ENCODE measurements at regions of chr10 and their contacts with region 1.

Region 1: GRCh38 chr10:103776878-103777591 is 78.3 kb downstream of the SH3PXD2A start:
- DNase-seq: peak; percentile 88 to 90
- ATAC-seq: peak; percentile 86
- H3K4me3 ChIP-seq: no peak overlapping the region
- H3K27ac ChIP-seq: no peak overlapping the region
- H3K4me1 ChIP-seq: no peaks in the 10 kb centered on the region
- H3K27me3 ChIP-seq: no peaks in the 10 kb centered on the region

Region 2: GRCh38 chr10:103840747-103841085 is 63.7 kb after region 1 on chr10:
- intact Hi-C with region 1: loop called in 1 of 2 experiments (anchors 1 kb)
- DNase-seq: no peak
- ATAC-seq: no peak
- H3K4me3 ChIP-seq: no peak overlapping the region
- H3K27ac ChIP-seq: no peak overlapping the region
- H3K4me1 ChIP-seq: peaks cover 2 to 11% of the 10 kb centered on the region in 2 donors
- H3K27me3 ChIP-seq: no peaks in the 10 kb centered on the region

Measured in aorta (tissue), 5 donors.